Uterus (tissue), 4 donors: ENCODE measurements at regions of chr1 and their contacts with region 1.

Region 1: DNA sequence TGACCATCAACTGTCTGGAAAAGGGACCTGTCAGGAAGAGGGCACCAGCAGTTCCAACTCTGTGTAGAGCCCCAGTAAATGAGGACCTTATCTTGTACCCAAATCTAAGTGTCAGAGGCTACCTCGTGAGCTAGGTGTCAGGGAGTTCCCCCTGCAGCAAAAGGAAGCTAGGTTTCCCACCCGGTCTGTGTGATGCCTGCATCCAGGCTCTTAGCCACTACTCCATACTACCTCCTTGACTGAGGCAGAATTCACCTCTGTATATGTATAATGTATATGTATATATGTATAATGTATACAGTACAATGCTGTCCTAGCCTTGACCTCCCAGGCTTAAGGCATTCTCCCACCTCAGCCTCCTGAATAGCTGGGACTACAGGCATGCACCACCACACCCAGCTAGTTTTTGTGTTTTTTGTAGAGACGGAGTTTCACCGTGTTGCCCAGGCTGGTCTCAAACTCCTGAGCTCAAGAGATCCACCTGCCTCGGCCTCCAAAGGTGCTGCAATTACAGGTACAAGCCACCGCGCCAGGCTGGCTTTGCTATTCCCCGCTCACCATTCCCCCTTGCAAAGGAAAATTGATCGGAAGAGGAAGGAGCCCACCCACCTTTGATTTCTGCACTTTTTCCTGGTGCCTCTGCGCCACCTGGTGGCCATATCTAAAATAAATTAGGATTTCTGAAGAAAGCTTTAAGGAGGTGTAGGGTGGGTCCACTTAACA is 15.7 kb upstream of the LUZP1 start:
- DNase-seq: peak in 1 of 2 donors; percentile 26
- H3K4me3 ChIP-seq: peak overlapping the region; percentile 14 to 32
- H3K27ac ChIP-seq: peak overlapping the region in 1 of 2 donors; percentile 28
- H3K4me1 ChIP-seq: no peaks in the 10 kb centered on the region
- H3K27me3 ChIP-seq: no peaks in the 10 kb centered on the region
- CTCF ChIP-seq: peak; percentile 83 to 92 (median 90)
- POLR2A ChIP-seq: no peak

Region 2: DNA sequence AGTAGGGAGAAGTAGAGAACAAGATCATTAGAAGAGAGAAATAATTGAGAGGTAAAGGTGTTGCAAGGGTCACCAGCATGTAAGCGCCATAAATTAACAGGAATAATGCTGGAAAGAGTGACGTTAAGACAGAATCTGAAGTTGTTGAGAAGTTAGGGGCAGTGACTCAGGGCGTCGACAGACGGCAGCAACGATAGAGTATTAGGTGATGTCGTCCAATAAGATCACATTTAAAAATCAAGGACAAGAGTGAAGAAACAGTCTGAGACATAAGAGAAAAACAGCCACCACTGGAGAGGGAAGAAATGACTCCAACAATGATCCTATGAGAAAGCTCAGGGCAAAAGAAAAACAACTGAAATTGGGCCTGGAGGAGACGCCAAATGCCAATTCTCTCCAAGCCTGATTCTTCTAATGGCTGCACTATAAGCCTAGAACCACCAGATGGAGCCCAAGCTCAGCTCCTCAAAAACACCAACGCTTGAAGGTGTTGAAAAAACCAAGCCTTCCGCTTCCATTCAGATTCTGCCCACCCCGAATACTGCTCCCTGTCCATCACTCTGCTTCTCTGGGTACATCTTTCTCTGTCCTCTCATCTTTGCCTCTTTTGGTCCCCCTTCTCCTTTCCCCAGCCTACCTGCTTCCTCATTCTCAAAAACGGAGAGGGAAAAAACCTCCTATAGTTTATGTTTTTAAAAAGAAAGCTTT is 85.8 kb before region 1 on chr1:
- intact Hi-C with region 1: loop called (anchors 2 kb)
- DNase-seq: peak; percentile 58 to 73
- H3K4me3 ChIP-seq: no peak overlapping the region
- H3K27ac ChIP-seq: peak overlapping the region in 1 of 2 donors; percentile 4
- H3K4me1 ChIP-seq: peaks cover 7 to 9% of the 10 kb centered on the region in 2 donors
- H3K27me3 ChIP-seq: no peaks in the 10 kb centered on the region
- CTCF ChIP-seq: peak; percentile 92 to 98 (median 94)
- POLR2A ChIP-seq: no peak